CD8-positive, alpha-beta T cell (primary cell): ENCODE measurements at regions of chr9 and their contacts with region 1.

Region 1: GRCh38 chr9:83649080-83649479 is 26.1 kb downstream of the IDNK start:
- DNase-seq: peak; percentile 58 to 85 (median 78)
- ATAC-seq: peak; percentile 95
- H3K4me3 ChIP-seq: no peak overlapping the region
- H3K4me3 Mint-ChIP-seq: no peak overlapping the region
- H3K27ac ChIP-seq: no peak overlapping the region
- H3K27ac Mint-ChIP-seq: peak overlapping the region; percentile 14
- H3K4me1 ChIP-seq: no peaks in the 10 kb centered on the region
- H3K4me1 Mint-ChIP-seq: peaks cover 3% of the 10 kb centered on the region
- H3K27me3 ChIP-seq: no peaks in the 10 kb centered on the region
- H3K27me3 Mint-ChIP-seq: no peaks in the 10 kb centered on the region
- CTCF ChIP-seq: peak; percentile 83

Region 2: GRCh38 chr9:83334320-83334719 is 314.8 kb before region 1 on chr9:
- CTCF ChIA-PET with region 1: interaction called, 3 read pairs
- POLR2A ChIA-PET with region 1: no interaction called
- intact Hi-C with region 1: loop called in 1 of 2 experiments (anchors 1 kb)
- DNase-seq: peak; percentile 33 to 72 (median 57)
- ATAC-seq: peak; percentile 23
- H3K4me3 ChIP-seq: no peak overlapping the region
- H3K4me3 Mint-ChIP-seq: no peak overlapping the region
- H3K27ac ChIP-seq: no peak overlapping the region
- H3K27ac Mint-ChIP-seq: no peak overlapping the region
- H3K4me1 ChIP-seq: no peaks in the 10 kb centered on the region
- H3K4me1 Mint-ChIP-seq: no peaks in the 10 kb centered on the region
- H3K27me3 ChIP-seq: no peaks in the 10 kb centered on the region
- H3K27me3 Mint-ChIP-seq: no peaks in the 10 kb centered on the region
- CTCF ChIP-seq: peak; percentile 70

Region 3: DNA sequence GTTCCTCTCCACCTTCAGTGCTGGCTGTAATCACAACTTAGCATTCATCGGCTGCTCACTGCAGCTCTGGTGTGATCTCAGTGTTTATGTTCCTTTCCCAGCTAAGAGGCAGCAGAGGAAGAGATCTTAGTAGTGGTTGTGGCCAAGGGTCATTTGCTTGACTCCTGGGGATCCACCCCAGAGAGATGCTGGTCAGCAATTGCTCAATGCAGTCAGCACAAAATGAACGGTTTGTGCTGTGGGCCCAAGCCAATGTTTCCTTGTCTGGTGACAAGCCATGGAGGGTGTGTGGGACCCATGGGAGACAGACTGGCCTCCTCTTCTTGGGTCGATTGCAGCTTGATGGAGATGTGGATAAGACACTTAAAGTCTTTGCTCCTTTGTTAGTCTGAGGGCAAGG is 94.8 kb before region 1 on chr9:
- CTCF ChIA-PET with region 1: no interaction called
- POLR2A ChIA-PET with region 1: no interaction called
- intact Hi-C with region 1: no loop called
- DNase-seq: no peak
- ATAC-seq: no peak
- H3K4me3 ChIP-seq: no peak overlapping the region
- H3K4me3 Mint-ChIP-seq: no peak overlapping the region
- H3K27ac ChIP-seq: no peak overlapping the region
- H3K27ac Mint-ChIP-seq: no peak overlapping the region
- H3K4me1 ChIP-seq: no peaks in the 10 kb centered on the region
- H3K4me1 Mint-ChIP-seq: no peaks in the 10 kb centered on the region
- H3K27me3 ChIP-seq: no peaks in the 10 kb centered on the region
- H3K27me3 Mint-ChIP-seq: no peaks in the 10 kb centered on the region
- CTCF ChIP-seq: no peak

Region 4: GRCh38 chr9:83583151-83584014 is 65.7 kb before region 1 on chr9:
- CTCF ChIA-PET with region 1: interaction called, 3 read pairs
- POLR2A ChIA-PET with region 1: no interaction called
- intact Hi-C with region 1: loop called (anchors 1 to 2 kb)
- DNase-seq: peak in 6 of 9 experiments; percentile 10 to 54 (median 26)
- ATAC-seq: peak; percentile 44
- H3K4me3 ChIP-seq: no peak overlapping the region
- H3K4me3 Mint-ChIP-seq: no peak overlapping the region
- H3K27ac ChIP-seq: no peak overlapping the region
- H3K27ac Mint-ChIP-seq: no peak overlapping the region
- H3K4me1 ChIP-seq: no peaks in the 10 kb centered on the region
- H3K4me1 Mint-ChIP-seq: no peaks in the 10 kb centered on the region
- H3K27me3 ChIP-seq: no peaks in the 10 kb centered on the region
- H3K27me3 Mint-ChIP-seq: no peaks in the 10 kb centered on the region
- CTCF ChIP-seq: peak; percentile 34

Region 5: GRCh38 chr9:83622939-83623678 is 26.0 kb before region 1 on chr9 and contains the start of gene IDNK:
- CTCF ChIA-PET with region 1: interaction called, 71 read pairs
- POLR2A ChIA-PET with region 1: no interaction called
- intact Hi-C with region 1: loop called (anchors 1 kb)
- DNase-seq: peak; percentile 21 to 82 (median 59)
- ATAC-seq: peak; percentile 88
- H3K4me3 ChIP-seq: peak within 1 kb of the TSS; percentile 67 to 74
- H3K4me3 Mint-ChIP-seq: peak within 1 kb of the TSS; percentile 92
- H3K27ac ChIP-seq: peak within 1 kb of the TSS; percentile 78 to 82
- H3K27ac Mint-ChIP-seq: peak within 1 kb of the TSS; percentile 98
- H3K4me1 ChIP-seq: peaks cover 19% of the 10 kb centered on the region
- H3K4me1 Mint-ChIP-seq: peaks cover 33% of the 10 kb centered on the region
- H3K27me3 ChIP-seq: no peaks in the 10 kb centered on the region
- H3K27me3 Mint-ChIP-seq: no peaks in the 10 kb centered on the region
- CTCF ChIP-seq: no peak
- total RNA-seq, gene IDNK: 4.3 to 4.6 TPM

Region 6: DNA sequence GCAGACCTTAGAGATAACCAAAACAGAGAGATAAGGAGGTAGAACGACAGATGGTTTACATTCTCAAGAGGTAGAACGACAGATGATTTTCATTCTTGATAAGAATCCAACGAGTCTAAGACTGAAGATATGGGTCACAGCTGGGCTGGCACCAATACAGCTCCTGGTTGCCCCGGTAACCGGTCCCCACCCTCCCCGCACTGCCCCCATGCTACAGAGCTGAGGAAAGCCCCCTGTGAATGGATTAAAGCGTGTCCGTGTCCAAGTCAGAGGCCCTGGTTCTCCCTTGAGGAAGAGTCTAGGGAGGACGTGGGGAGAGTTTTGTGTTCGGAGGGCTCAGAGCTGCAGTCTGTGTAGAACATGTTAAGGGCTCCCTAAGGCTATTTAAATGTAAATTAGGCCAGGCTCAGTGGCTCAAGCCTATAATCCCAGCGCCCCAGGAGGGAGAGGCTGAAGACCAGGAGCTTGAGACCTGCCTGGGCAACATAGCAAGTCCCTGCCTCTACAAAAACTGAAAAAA is 18.1 kb before region 1 on chr9:
- CTCF ChIA-PET with region 1: interaction called, 17 read pairs
- POLR2A ChIA-PET with region 1: interaction called, 3 read pairs
- intact Hi-C with region 1: no loop called
- DNase-seq: peak in 1 of 9 experiments; percentile 19
- ATAC-seq: no peak
- H3K4me3 ChIP-seq: no peak overlapping the region
- H3K4me3 Mint-ChIP-seq: no peak overlapping the region
- H3K27ac ChIP-seq: no peak overlapping the region
- H3K27ac Mint-ChIP-seq: no peak overlapping the region
- H3K4me1 ChIP-seq: no peaks in the 10 kb centered on the region
- H3K4me1 Mint-ChIP-seq: peaks cover 5% of the 10 kb centered on the region
- H3K27me3 ChIP-seq: no peaks in the 10 kb centered on the region
- H3K27me3 Mint-ChIP-seq: no peaks in the 10 kb centered on the region
- CTCF ChIP-seq: no peak

Region 7: DNA sequence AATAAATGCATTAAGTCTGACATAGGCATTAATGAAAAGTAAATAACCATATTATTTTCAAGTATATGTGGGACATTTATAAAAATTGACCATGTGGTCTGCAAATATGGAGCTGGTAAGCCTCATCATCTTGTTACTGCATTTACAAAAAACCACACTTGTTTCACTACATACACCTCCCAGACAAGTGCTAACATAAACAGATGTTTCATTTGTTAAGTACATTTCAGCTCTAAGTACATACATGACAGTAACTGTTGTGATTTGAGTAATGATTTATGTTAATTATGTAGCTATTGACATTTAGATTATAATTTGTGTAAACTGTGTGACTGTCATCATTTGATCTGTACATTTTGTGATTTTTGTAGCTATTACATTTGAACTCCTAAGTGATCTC is 12.3 kb before region 1 on chr9:
- CTCF ChIA-PET with region 1: interaction called, 17 read pairs
- POLR2A ChIA-PET with region 1: interaction called, 3 read pairs
- intact Hi-C with region 1: no loop called
- DNase-seq: no peak
- ATAC-seq: no peak
- H3K4me3 ChIP-seq: no peak overlapping the region
- H3K4me3 Mint-ChIP-seq: no peak overlapping the region
- H3K27ac ChIP-seq: no peak overlapping the region
- H3K27ac Mint-ChIP-seq: no peak overlapping the region
- H3K4me1 ChIP-seq: no peaks in the 10 kb centered on the region
- H3K4me1 Mint-ChIP-seq: no peaks in the 10 kb centered on the region
- H3K27me3 ChIP-seq: no peaks in the 10 kb centered on the region
- H3K27me3 Mint-ChIP-seq: no peaks in the 10 kb centered on the region
- CTCF ChIP-seq: no peak

Region 8: GRCh38 chr9:83707768-83708514 is 58.9 kb after region 1 on chr9 and contains the start of gene UBQLN1:
- CTCF ChIA-PET with region 1: interaction called, 11 read pairs
- POLR2A ChIA-PET with region 1: no interaction called
- intact Hi-C with region 1: no loop called
- DNase-seq: peak; percentile 83 to 97 (median 91)
- ATAC-seq: peak; percentile 80
- H3K4me3 ChIP-seq: peak within 1 kb of the TSS; percentile 89 to 97
- H3K4me3 Mint-ChIP-seq: peak within 1 kb of the TSS; percentile 85
- H3K27ac ChIP-seq: peak within 1 kb of the TSS; percentile 98 to 99
- H3K27ac Mint-ChIP-seq: peak within 1 kb of the TSS; percentile 100
- H3K4me1 ChIP-seq: peaks cover 40% of the 10 kb centered on the region
- H3K4me1 Mint-ChIP-seq: peaks cover 43% of the 10 kb centered on the region
- H3K27me3 ChIP-seq: no peaks in the 10 kb centered on the region
- H3K27me3 Mint-ChIP-seq: no peaks in the 10 kb centered on the region
- CTCF ChIP-seq: no peak
- total RNA-seq, gene UBQLN1: 163 to 169 TPM